ENCODE measurements at regions of chr5 and their contacts with region 1.

Region 1: DNA sequence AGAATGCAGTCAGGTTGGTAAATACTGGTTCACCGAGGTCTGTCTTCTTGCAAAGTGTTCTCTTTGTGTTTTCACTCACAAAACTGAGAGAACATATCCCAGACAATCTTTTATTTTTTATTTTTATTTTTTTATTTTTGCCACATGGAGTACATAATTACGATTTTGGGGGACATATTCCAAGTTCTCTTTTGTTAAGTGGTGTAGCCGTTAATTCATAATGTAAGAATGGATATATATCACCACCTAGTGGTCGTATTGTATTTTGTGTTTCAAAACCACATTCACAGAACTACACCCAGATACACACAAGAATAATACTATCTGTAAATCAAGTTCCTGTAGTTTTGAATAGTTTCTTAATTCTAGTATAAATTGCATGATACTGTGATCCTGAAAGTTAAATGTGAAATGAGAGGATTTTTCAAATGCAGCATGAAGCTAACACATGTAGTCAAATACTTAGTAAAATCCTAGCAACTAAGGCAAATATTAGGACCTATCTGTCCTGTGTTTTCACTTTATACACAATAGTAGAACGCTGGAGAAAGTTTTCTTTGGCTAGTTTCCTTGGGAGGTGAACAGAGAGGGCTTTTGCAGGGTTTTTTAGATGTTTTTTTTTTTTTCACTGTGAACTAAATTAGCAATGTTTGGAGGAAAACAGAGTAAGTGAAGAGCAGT is 92.7 kb downstream of the VCAN start:
- DNase-seq: no peak
- ATAC-seq: peak in 3 of 4 donors; percentile 58 to 68 (median 66)
- H3K4me3 ChIP-seq: no peak overlapping the region
- H3K27ac ChIP-seq: peak overlapping the region in 3 of 12 donors; percentile 11 to 50 (median 44)
- H3K4me1 ChIP-seq: peaks cover 0 to 23% (median 4%) of the 10 kb centered on the region in 12 donors
- H3K27me3 ChIP-seq: no peaks in the 10 kb centered on the region
- CTCF ChIP-seq: peak; percentile 53 to 78 (median 67)
- POLR2A ChIP-seq: no peak

Region 2: GRCh38 chr5:82174128-82174918 is 1389.9 kb before region 1 on chr5:
- intact Hi-C with region 1: loop called in 1 of 10 experiments (anchors 10 kb)
- DNase-seq: peak; percentile 31 to 58 (median 50)
- ATAC-seq: peak; percentile 64 to 87 (median 81)
- H3K4me3 ChIP-seq: no peak overlapping the region
- H3K27ac ChIP-seq: peak overlapping the region in 1 of 12 donors; percentile 34
- H3K4me1 ChIP-seq: peaks cover 0 to 14% (median 0%) of the 10 kb centered on the region in 12 donors
- H3K27me3 ChIP-seq: no peaks in the 10 kb centered on the region
- CTCF ChIP-seq: peak; percentile 29 to 72 (median 52)
- POLR2A ChIP-seq: no peak

Region 3: GRCh38 chr5:82312373-82312856 is 1251.8 kb before region 1 on chr5:
- intact Hi-C with region 1: loop called in 6 of 10 experiments (anchors 2 to 5 kb)
- DNase-seq: peak; percentile 54 to 69 (median 67)
- ATAC-seq: peak; percentile 72 to 87 (median 82)
- H3K4me3 ChIP-seq: peak overlapping the region in 4 of 12 donors; percentile 10 to 26 (median 14)
- H3K27ac ChIP-seq: peak overlapping the region in 7 of 12 donors; percentile 17 to 69 (median 43)
- H3K4me1 ChIP-seq: peaks cover 0 to 16% (median 11%) of the 10 kb centered on the region in 12 donors
- H3K27me3 ChIP-seq: no peaks in the 10 kb centered on the region
- CTCF ChIP-seq: peak; percentile 59 to 89 (median 80)
- POLR2A ChIP-seq: no peak

Region 4: DNA sequence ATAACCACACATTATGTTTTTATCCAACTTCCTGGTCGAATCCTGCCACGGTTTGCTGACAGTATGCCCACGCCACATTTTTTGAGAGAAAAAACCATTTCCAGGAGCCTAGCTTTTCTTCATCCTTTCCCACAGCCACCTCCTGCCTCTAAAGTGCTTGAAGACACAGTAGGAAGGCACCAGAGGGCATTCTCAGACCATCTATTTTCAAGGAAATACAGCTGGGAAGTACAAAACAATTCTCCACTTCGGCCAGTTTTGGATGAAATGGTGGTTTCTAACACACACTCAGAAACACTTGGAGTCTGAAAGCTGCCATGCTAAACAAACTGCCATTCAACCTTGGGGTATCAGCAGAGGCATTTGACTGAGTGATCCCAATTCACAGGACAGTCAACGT is 1199.7 kb before region 1 on chr5:
- intact Hi-C with region 1: loop called in 1 of 10 experiments (anchors 5 kb)
- DNase-seq: no peak
- ATAC-seq: peak in 3 of 4 donors; percentile 82 to 86 (median 84)
- H3K4me3 ChIP-seq: no peak overlapping the region
- H3K27ac ChIP-seq: peak overlapping the region in 1 of 12 donors; percentile 44
- H3K4me1 ChIP-seq: peaks cover 0 to 15% (median 2%) of the 10 kb centered on the region in 12 donors
- H3K27me3 ChIP-seq: no peaks in the 10 kb centered on the region
- CTCF ChIP-seq: peak in 11 of 12 donors; percentile 16 to 61 (median 43)
- POLR2A ChIP-seq: no peak

Region 5: DNA sequence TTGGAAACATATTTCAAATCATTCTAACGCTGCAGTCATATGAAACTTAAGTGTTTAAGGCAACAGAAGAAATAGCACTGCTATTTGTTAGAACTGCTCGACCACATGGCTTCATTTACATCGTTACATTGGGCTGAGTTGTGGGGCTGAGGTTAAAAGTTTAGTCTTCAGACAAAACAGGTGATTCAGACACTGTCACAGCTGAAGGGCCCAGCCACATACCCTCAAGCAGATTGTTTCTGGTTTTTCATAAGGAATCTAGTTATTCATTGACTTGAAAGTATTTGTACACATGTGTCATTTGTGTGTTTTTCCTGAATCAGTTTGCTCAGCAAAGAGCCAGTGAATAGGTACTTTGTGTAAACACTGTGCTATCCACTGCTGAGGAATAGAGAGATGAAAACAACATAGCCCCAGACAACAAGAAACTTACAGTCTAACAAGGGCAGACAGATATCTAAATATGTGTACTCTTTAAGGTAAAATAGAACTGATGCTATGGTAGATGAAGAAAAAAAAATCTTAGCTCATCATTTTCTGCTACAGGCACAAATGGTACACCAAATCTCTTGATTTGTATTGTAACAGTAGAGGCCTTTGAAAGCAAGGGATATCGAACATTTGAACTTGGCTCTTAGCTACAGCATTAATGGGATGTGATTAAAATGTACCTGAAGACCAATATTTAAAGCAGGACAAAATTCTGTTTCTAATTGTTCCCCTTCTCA is 928.5 kb before region 1 on chr5:
- intact Hi-C with region 1: loop called (anchors 2 to 10 kb)
- DNase-seq: no peak
- ATAC-seq: no peak
- H3K4me3 ChIP-seq: no peak overlapping the region
- H3K27ac ChIP-seq: no peak overlapping the region
- H3K4me1 ChIP-seq: peaks cover 0 to 12% (median under 1%) of the 10 kb centered on the region in 12 donors
- H3K27me3 ChIP-seq: no peaks in the 10 kb centered on the region
- CTCF ChIP-seq: no peak
- POLR2A ChIP-seq: no peak

Region 6: DNA sequence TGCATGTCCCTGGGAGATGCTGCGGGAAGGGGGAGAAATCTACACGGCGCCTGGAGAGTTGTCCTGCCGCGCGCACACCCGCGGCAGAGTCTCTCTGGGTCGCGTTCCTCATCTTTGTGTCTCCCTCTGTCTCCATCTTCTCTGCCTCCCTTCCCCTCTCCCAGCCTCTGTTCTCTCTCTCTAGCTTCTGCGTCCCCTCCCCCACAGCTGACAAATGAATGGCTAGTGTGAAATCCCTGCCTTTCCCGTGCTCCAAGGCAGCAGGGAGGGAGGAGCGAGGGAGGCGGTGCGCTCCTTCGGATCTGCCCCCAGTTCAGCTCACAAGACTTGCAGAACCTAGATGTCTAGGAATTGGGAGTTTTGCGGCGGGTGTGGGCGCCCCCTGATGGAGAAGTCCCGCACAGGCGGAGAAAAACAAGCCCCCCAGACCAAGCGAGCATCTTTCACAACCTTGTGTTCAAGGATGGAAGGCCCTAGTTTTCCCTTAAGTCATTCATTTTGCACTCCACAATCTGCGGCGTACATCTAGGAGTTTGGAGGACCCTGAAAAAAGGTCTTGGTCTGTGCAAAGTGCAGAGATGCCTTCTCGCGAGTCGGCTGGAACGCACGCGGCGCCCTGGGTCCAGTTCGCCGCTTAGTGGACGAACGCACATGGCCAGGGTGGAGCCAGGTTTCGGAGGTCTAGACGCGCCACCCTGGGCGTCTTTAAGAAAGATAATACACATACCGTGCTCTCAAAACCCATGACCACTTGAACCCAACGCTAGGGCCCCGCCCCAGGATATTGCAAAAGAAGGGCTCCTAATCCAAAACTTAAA is 90.7 kb before region 1 on chr5:
- intact Hi-C with region 1: loop called in 4 of 10 experiments (anchors 5 to 10 kb)
- DNase-seq: peak; percentile 85 to 92 (median 88)
- ATAC-seq: peak; percentile 78 to 88 (median 83)
- H3K4me3 ChIP-seq: peak overlapping the region; percentile 34 to 69 (median 56)
- H3K27ac ChIP-seq: peak overlapping the region; percentile 14 to 88 (median 72)
- H3K4me1 ChIP-seq: peaks cover 0 to 54% (median 25%) of the 10 kb centered on the region in 12 donors
- H3K27me3 ChIP-seq: peaks cover 0 to 68% (median 36%) of the 10 kb centered on the region in 9 donors
- CTCF ChIP-seq: peak; percentile 70 to 92 (median 84)
- POLR2A ChIP-seq: no peak

Measured in heart left ventricle (tissue), 16 donors.